Panc1 (cell line): ENCODE measurements at regions of chr2 and their contacts with region 1.

Region 1: DNA sequence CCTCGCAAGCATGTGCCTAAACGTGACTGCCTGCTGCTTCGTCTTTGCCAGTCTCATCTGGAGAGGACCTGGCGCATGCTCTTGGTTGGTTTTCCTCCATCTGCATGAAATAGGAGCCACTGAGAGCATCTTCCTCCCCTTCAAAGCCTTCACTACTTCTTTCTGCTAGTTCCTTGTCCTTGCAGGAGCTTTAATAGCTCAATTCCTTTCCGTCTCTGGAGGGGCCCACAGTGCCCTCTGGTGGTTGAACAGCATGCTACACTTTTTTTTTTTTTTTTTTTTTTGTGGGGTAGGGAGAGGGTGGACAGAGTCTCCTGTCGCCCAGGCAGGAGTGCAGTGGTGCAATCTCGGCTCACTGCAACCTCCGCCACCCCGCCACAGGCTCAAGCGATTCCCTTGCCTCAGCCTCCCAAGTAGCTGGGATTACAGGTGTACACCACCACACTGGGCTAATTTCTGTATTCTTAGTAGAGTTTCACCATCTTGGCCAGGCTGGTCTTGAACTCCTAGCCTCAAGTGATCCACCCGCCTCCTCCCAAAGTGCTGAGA is 59.6 kb downstream of the SP110 start:
- DNase-seq: peak; percentile 46
- ATAC-seq: peak; percentile 82
- H3K4me3 ChIP-seq: no peak overlapping the region
- H3K27ac ChIP-seq: no peak overlapping the region
- H3K4me1 ChIP-seq: no peaks in the 10 kb centered on the region
- H3K27me3 ChIP-seq: no peaks in the 10 kb centered on the region
- CTCF ChIP-seq: peak; percentile 89

Region 2: DNA sequence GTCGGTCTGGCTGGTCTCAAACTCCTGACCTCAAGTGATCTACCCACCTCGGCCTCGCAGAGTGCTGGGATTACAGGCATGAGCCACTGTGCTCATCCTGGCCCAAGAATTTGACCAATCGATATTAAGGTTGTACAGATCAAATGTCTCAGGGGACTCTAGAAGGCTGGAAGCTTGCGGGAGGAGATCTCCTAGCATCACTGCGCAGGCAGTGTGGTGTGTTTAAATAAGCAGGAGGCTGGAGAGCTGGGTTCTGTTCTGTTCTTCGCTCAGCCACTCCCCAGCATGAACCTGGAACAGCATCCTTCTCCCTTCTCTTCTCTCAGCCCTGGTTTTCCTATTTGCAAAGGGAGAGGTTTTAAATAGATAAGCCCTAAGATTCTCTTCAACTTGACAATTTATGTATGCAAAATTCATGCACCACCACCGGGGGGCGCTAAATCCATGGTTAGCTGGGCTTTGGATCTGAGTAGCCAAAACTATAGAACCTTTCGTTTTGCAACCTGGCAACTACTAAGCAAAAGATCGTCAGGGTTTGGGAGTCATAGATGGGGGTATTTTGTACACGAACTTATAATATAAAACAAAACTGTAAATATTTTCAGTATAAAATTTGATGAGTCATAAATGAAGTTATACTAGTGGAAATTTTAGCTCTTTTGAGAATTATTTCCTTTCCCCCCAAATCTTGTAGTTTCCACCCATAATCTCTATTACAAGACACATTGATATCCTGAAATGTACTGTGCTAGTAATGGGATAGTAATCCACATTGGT is 152.1 kb before region 1 on chr2:
- CTCF ChIA-PET with region 1: interaction called, 11 read pairs
- POLR2A ChIA-PET with region 1: no interaction called
- in situ Hi-C with region 1: no loop called
- intact Hi-C with region 1: loop called (anchors 1 kb)
- DNase-seq: peak; percentile 56
- ATAC-seq: peak; percentile 76
- H3K4me3 ChIP-seq: no peak overlapping the region
- H3K27ac ChIP-seq: no peak overlapping the region
- H3K4me1 ChIP-seq: no peaks in the 10 kb centered on the region
- H3K27me3 ChIP-seq: no peaks in the 10 kb centered on the region
- CTCF ChIP-seq: peak; percentile 92

Region 3: GRCh38 chr2:230023309-230023708 is 136.9 kb before region 1 on chr2:
- CTCF ChIA-PET with region 1: interaction called, 10 read pairs
- POLR2A ChIA-PET with region 1: no interaction called
- in situ Hi-C with region 1: no loop called
- intact Hi-C with region 1: no loop called
- DNase-seq: no peak
- ATAC-seq: peak; percentile 34; the same call in 1 of the 2 replicates
- H3K4me3 ChIP-seq: no peak overlapping the region
- H3K27ac ChIP-seq: no peak overlapping the region
- H3K4me1 ChIP-seq: no peaks in the 10 kb centered on the region
- H3K27me3 ChIP-seq: no peaks in the 10 kb centered on the region
- CTCF ChIP-seq: no peak

Region 4: DNA sequence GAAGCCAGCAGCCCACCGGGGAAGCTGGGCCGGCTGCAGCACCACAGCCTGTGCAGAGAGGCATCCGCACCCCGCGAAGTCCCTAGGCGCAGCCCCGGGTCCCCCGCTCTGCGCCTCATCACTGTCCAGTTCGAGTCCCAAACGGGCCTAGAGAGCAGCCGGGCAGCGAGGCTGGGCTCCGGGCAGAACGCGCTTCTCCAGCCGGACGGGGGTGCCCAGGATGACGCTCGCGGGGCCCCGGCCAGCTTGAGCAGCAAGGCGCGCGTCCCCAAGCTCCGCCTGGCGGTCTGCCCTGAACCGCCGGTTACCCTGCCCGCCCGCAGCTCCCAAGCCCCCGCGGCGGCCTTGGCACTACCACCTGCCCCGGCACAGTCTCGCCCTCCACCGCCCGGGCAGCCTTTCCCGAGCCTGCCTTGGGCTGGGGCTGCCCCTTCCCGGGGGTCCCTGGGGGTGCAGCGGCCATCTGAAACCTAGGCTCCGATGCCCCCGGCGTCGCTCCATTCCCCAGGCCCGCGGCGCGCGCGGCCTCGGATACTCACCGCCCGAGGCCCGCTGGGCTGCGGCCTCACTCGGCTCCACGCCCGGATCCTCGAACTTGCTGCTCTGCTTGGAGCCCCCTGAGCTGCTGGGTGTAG is 92.1 kb before region 1 on chr2:
- CTCF ChIA-PET with region 1: interaction called, 16 read pairs
- POLR2A ChIA-PET with region 1: no interaction called
- in situ Hi-C with region 1: no loop called
- intact Hi-C with region 1: loop called (anchors 2 kb)
- DNase-seq: no peak
- ATAC-seq: peak; percentile 78
- H3K4me3 ChIP-seq: peak overlapping the region; percentile 51 to 70
- H3K27ac ChIP-seq: peak overlapping the region; percentile 39; the same call in 1 of the 2 replicates
- H3K4me1 ChIP-seq: no peaks in the 10 kb centered on the region
- H3K27me3 ChIP-seq: no peaks in the 10 kb centered on the region
- CTCF ChIP-seq: no peak

Region 5: GRCh38 chr2:230170532-230170931 is 10.3 kb after region 1 on chr2:
- CTCF ChIA-PET with region 1: interaction called, 5 read pairs
- POLR2A ChIA-PET with region 1: interaction called, 18 read pairs
- in situ Hi-C with region 1: no loop called
- intact Hi-C with region 1: no loop called
- DNase-seq: no peak
- ATAC-seq: no peak
- H3K4me3 ChIP-seq: no peak overlapping the region
- H3K27ac ChIP-seq: no peak overlapping the region
- H3K4me1 ChIP-seq: no peaks in the 10 kb centered on the region
- H3K27me3 ChIP-seq: no peaks in the 10 kb centered on the region
- CTCF ChIP-seq: no peak